WTC11 (cell line): ENCODE measurements at regions of chr12 and their contacts with region 1.

Region 1: DNA sequence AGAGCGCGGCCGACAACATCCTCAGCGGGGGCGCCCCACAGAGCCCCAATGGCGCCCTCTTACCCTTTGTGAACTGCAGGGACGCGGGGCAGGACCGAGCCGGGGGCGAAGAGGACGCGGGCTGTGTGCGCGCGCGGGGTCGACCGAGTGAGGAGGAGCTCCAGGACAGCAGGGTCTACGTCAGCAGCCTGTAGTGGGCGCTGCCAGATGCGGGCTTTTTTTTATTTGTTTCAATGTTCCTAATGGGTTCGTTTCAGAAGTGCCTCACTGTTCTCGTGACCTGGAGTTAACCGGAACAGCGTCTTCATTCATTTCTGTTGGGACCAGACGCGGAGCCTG is 103.8 kb upstream of the FKBP4 start:
- DNase-seq: peak; percentile 72
- ATAC-seq: peak; percentile 86
- H3K4me3 Mint-ChIP-seq: peak overlapping the region; percentile 74
- H3K27ac Mint-ChIP-seq: no peak overlapping the region
- H3K4me1 Mint-ChIP-seq: peaks cover 27% of the 10 kb centered on the region
- H3K27me3 Mint-ChIP-seq: peaks cover 28% of the 10 kb centered on the region
- CTCF ChIP-seq: no peak

Region 2: GRCh38 chr12:2624543-2625288 is 66.3 kb before region 1 on chr12:
- CTCF ChIA-PET with region 1: interaction called, 13 read pairs
- POLR2A ChIA-PET with region 1: no interaction called
- DNase-seq: peak; percentile 87
- ATAC-seq: peak; percentile 91
- H3K4me3 Mint-ChIP-seq: no peak overlapping the region
- H3K27ac Mint-ChIP-seq: peak overlapping the region; percentile 85
- H3K4me1 Mint-ChIP-seq: peaks cover 29% of the 10 kb centered on the region
- H3K27me3 Mint-ChIP-seq: no peaks in the 10 kb centered on the region; the same call in 1 of the 2 replicates
- CTCF ChIP-seq: peak; percentile 66

Region 3: DNA sequence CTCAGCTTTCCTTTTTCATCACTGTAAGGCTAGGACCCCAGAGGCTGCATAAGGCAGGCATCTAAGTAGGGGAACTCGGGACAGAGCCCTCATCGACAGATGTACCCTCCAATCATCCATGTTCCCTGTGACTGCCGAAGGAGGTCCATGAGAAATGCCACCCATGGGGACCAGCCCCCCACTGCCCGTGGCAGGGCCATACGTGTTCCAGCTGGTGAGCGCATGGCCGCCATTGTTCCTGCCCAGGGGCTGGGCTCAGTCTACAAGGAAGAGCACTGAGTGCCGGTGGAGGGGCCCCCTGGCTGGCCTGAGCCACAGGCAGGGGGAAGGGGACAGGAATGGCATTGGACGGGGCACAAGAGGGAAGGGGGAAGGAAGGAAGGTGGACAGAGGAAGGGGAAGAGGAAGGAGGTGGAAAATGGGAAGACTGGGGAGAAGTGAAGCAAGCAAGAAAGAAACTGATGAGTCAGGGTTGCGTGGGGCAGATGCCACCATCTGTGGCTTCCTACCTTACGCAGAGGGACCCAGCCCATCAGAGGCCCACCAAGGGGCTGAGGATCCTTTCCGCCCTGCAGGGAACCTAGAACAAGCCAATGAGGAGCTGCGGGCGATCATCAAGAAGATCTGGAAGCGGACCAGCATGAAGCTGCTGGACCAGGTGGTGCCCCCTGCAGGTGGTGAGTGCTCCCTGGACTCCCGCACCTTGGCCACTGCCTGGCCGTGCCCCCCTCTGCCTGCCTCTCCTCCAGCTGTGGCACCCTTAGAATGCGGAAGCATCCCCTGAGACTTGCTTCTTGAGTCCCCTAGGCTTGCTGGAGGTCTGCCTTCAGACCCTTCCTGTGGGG is 16.8 kb before region 1 on chr12:
- CTCF ChIA-PET with region 1: interaction called, 11 read pairs
- POLR2A ChIA-PET with region 1: no interaction called
- DNase-seq: peak; percentile 61
- ATAC-seq: peak; percentile 75
- H3K4me3 Mint-ChIP-seq: no peak overlapping the region
- H3K27ac Mint-ChIP-seq: no peak overlapping the region
- H3K4me1 Mint-ChIP-seq: no peaks in the 10 kb centered on the region; the same call in 1 of the 2 replicates
- H3K27me3 Mint-ChIP-seq: no peaks in the 10 kb centered on the region
- CTCF ChIP-seq: peak; percentile 38; the same call in 1 of the 2 replicates

Region 4: GRCh38 chr12:2752676-2753371 is 61.8 kb after region 1 on chr12:
- CTCF ChIA-PET with region 1: interaction called, 32 read pairs
- POLR2A ChIA-PET with region 1: no interaction called
- DNase-seq: peak; percentile 93
- ATAC-seq: peak; percentile 87
- H3K4me3 Mint-ChIP-seq: peak overlapping the region; percentile 58; the same call in 1 of the 2 replicates
- H3K27ac Mint-ChIP-seq: no peak overlapping the region
- H3K4me1 Mint-ChIP-seq: peaks cover 62% of the 10 kb centered on the region
- H3K27me3 Mint-ChIP-seq: peaks cover 43% of the 10 kb centered on the region
- CTCF ChIP-seq: no peak

Region 5: GRCh38 chr12:2853626-2854025 is 162.7 kb after region 1 on chr12:
- CTCF ChIA-PET with region 1: interaction called, 10 read pairs
- POLR2A ChIA-PET with region 1: no interaction called
- DNase-seq: peak; percentile 95
- ATAC-seq: peak; percentile 93
- H3K4me3 Mint-ChIP-seq: no peak overlapping the region
- H3K27ac Mint-ChIP-seq: no peak overlapping the region
- H3K4me1 Mint-ChIP-seq: peaks cover 3% of the 10 kb centered on the region; the same call in 1 of the 2 replicates
- H3K27me3 Mint-ChIP-seq: no peaks in the 10 kb centered on the region; the same call in 1 of the 2 replicates
- CTCF ChIP-seq: peak; percentile 88